ENCODE measurements at regions of chr1 and their contacts with region 1.

Region 1: GRCh38 chr1:35451125-35451528 is 106.1 kb downstream of the KIAA0319L start:
- DNase-seq: peak; percentile 62 to 85 (median 79)
- ATAC-seq: peak; percentile 94
- H3K4me3 ChIP-seq: no peak overlapping the region
- H3K4me3 Mint-ChIP-seq: no peak overlapping the region
- H3K27ac ChIP-seq: no peak overlapping the region
- H3K27ac Mint-ChIP-seq: peak overlapping the region; percentile 85
- H3K4me1 ChIP-seq: peaks cover 14% of the 10 kb centered on the region
- H3K4me1 Mint-ChIP-seq: peaks cover 27% of the 10 kb centered on the region
- H3K27me3 ChIP-seq: no peaks in the 10 kb centered on the region
- H3K27me3 Mint-ChIP-seq: no peaks in the 10 kb centered on the region
- CTCF ChIP-seq: peak; percentile 82

Region 2: GRCh38 chr1:35488336-35488735 is 37.2 kb after region 1 on chr1:
- CTCF ChIA-PET with region 1: interaction called, 12 read pairs
- POLR2A ChIA-PET with region 1: no interaction called
- intact Hi-C with region 1: no loop called
- DNase-seq: no peak
- ATAC-seq: no peak
- H3K4me3 ChIP-seq: no peak overlapping the region
- H3K4me3 Mint-ChIP-seq: no peak overlapping the region
- H3K27ac ChIP-seq: no peak overlapping the region
- H3K27ac Mint-ChIP-seq: peak overlapping the region; percentile 14
- H3K4me1 ChIP-seq: no peaks in the 10 kb centered on the region
- H3K4me1 Mint-ChIP-seq: peaks cover 9% of the 10 kb centered on the region
- H3K27me3 ChIP-seq: no peaks in the 10 kb centered on the region
- H3K27me3 Mint-ChIP-seq: no peaks in the 10 kb centered on the region
- CTCF ChIP-seq: no peak

Region 3: DNA sequence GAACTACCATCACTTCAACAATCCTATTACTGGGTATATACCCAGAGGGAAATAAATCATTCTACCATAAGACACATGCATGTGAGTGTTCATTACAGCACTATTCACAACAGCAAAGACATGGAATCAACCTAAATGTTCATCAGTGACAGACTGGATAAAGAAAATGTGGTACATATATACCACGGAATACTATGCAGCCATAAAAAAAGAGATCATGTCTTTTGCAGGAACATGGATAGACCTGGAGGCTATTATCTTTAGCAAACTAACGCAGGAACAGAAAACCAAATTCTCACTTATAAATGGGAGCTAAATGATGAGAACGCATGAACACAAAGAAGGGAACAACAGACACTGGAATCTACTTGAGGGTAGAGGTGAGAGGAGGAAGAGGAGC is 67.1 kb after region 1 on chr1:
- CTCF ChIA-PET with region 1: interaction called, 19 read pairs
- POLR2A ChIA-PET with region 1: no interaction called
- intact Hi-C with region 1: no loop called
- DNase-seq: no peak
- ATAC-seq: no peak
- H3K4me3 ChIP-seq: no peak overlapping the region
- H3K4me3 Mint-ChIP-seq: no peak overlapping the region
- H3K27ac ChIP-seq: no peak overlapping the region
- H3K27ac Mint-ChIP-seq: no peak overlapping the region
- H3K4me1 ChIP-seq: no peaks in the 10 kb centered on the region
- H3K4me1 Mint-ChIP-seq: peaks cover 37% of the 10 kb centered on the region
- H3K27me3 ChIP-seq: no peaks in the 10 kb centered on the region
- H3K27me3 Mint-ChIP-seq: no peaks in the 10 kb centered on the region
- CTCF ChIP-seq: no peak

Region 4: GRCh38 chr1:35564037-35564883 is 113.1 kb after region 1 on chr1:
- CTCF ChIA-PET with region 1: interaction called, 144 read pairs
- POLR2A ChIA-PET with region 1: interaction called, 6 read pairs
- intact Hi-C with region 1: loop called (anchors 1 kb)
- DNase-seq: peak; percentile 61 to 87 (median 83)
- ATAC-seq: peak; percentile 74
- H3K4me3 ChIP-seq: no peak overlapping the region
- H3K4me3 Mint-ChIP-seq: no peak overlapping the region
- H3K27ac ChIP-seq: no peak overlapping the region
- H3K27ac Mint-ChIP-seq: no peak overlapping the region
- H3K4me1 ChIP-seq: no peaks in the 10 kb centered on the region
- H3K4me1 Mint-ChIP-seq: peaks cover 32% of the 10 kb centered on the region
- H3K27me3 ChIP-seq: no peaks in the 10 kb centered on the region
- H3K27me3 Mint-ChIP-seq: no peaks in the 10 kb centered on the region
- CTCF ChIP-seq: peak; percentile 72

Region 5: DNA sequence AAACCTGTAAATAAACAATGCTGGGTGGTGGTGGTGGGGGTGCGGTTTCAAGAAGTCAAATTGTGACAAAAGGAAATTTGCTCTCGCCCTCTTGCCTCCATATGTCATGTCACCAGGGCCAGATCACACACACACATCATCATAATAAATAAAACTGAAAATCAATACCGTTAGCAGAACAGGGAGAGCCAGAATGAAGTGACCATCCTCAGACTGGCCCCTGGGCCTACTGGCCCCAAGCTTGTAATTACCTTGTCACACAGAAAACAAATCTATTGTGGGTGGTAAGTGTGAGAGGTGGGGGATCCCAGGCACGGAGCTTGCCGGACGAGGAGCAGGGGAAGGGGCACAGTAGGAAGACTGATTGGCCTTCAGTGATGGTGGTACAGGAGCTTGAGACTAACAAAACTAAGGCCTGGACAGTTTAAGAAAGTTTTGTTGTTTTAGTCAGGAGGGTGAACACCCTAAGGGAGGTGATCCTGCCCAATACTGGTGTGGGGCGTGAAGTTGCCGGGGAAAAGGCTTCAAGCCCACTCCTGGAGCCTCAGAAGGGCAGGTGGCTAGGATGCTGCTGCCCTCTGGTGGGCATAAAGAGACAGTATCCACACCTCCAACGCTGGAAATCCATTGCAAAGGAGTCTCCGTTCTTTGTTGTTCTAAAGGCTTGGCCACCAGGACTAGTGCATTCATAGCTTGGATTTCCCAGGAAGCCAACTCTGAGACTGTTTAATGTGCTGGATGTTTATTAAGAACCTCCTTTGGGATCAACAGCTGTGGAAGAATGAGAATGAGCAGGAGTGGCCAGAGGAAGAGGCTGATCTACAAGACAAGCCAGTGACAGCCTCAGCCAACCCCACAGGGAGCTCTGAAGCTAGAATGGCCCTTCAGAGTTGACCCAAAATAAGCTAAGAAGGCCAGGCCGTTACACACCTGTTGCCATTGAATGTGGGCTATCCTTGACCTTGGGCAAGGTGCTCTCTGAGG is 275.6 kb after region 1 on chr1:
- CTCF ChIA-PET with region 1: interaction called, 39 read pairs
- POLR2A ChIA-PET with region 1: no interaction called
- intact Hi-C with region 1: loop called (anchors 1 to 2 kb)
- DNase-seq: peak in 8 of 9 experiments; percentile 30 to 79 (median 53)
- ATAC-seq: peak; percentile 90
- H3K4me3 ChIP-seq: no peak overlapping the region
- H3K4me3 Mint-ChIP-seq: no peak overlapping the region
- H3K27ac ChIP-seq: no peak overlapping the region
- H3K27ac Mint-ChIP-seq: no peak overlapping the region
- H3K4me1 ChIP-seq: no peaks in the 10 kb centered on the region
- H3K4me1 Mint-ChIP-seq: no peaks in the 10 kb centered on the region
- H3K27me3 ChIP-seq: no peaks in the 10 kb centered on the region
- H3K27me3 Mint-ChIP-seq: no peaks in the 10 kb centered on the region
- CTCF ChIP-seq: peak; percentile 87

Measured in CD8-positive, alpha-beta T cell (primary cell).